ENCODE measurements at regions of chr7 and their contacts with region 1.

Region 1: DNA sequence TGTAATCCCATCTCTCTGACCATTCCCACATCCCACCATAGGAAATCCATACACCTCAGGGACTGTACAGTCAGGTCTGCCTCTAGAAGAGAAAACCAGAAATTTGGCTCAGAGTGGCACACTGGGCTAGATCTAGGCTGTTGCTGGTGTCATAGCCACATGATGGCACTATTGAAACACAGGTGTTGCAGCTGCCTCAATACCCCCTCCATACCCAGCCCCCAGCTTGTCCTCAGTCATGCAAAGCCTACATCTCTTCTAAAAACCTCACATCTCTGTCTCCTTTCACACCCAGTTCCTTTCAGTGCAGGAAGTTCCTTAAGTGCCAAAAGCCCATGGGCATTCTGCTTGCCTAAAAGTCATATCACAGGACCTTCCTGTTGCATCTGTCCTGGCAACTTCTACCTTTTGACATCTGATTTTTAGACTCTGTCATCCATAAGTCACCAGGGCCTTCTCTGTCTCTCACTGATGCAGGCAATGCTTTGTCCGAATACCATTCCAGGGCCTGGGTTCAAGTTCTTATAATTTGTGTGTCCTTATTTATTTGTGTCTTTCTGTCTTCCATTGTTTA is 27.0 kb upstream of the HIBADH start:
- DNase-seq: peak; percentile 78
- H3K4me3 ChIP-seq: no peak overlapping the region
- H3K27ac ChIP-seq: no peak overlapping the region
- H3K4me1 ChIP-seq: peaks cover 11% of the 10 kb centered on the region
- CTCF ChIP-seq: peak; percentile 92

Region 2: DNA sequence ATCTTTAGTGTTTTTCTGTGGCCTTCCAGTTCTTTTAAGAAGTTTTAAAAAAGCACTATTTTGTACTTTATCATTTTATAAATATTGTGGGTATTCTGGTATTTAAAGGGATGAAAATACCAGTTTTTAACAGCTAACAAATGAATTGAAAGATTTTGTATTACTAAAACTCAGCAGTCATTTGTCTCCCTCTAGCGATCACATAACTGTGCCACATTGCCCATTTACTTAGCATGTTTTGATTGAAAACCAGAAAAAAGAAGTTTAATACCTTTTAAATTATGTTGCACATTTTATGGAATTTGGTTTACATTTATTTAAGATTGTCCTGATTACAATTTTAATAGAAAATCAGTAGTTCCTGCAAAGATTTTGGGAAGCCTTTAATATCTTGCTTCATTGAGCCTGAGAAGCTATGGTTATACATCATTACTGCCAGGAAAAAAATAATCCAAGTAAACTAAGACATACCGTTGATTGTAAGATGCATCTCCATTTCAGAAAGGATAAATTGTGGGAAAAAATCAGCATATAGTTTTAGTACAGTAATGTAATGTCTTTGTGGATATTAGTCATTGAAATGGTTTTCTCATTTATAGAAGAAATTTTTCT is 85.1 kb after region 1 on chr7:
- CTCF ChIA-PET with region 1: no interaction called
- POLR2A ChIA-PET with region 1: no interaction called
- intact Hi-C with region 1: loop called (anchors 1 kb)
- DNase-seq: peak; percentile 53
- H3K4me3 ChIP-seq: no peak overlapping the region
- H3K27ac ChIP-seq: no peak overlapping the region
- H3K4me1 ChIP-seq: no peaks in the 10 kb centered on the region
- CTCF ChIP-seq: peak; percentile 99

Region 3: GRCh38 chr7:27793780-27794179 is 104.1 kb after region 1 on chr7:
- CTCF ChIA-PET with region 1: no interaction called
- POLR2A ChIA-PET with region 1: no interaction called
- intact Hi-C with region 1: no loop called
- DNase-seq: no peak
- H3K4me3 ChIP-seq: no peak overlapping the region
- H3K27ac ChIP-seq: no peak overlapping the region
- H3K4me1 ChIP-seq: no peaks in the 10 kb centered on the region
- CTCF ChIP-seq: no peak

Region 4: DNA sequence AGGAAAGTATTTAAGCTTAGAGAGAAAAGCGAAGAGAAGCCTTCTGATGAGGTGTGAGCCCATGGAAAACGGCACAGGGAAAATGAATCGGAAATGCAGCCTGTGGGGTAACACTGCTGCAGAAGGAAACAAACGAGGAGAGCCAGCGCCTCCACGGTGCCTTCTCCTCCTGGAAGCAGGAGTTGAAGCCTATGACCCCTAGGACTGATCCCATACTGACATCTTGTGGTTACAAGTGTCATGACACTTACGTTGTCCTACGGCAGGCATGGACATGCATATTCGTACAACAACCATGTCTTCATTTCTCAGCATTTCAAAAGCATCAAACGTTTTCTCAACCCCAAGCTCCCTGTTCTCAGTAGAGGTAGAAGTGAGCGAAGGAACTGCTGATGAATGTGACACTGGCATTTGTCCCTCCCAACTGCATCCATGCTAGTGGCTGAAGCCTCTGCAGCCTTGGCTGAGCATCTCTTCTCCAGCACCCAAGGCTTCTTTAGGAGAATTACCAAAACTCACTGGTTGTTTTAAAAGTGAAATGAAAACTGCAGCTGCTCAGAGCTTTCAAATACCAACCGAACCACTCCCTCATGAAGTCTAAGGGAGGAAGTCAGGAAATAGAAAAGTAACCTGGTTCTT is 330.7 kb after region 1 on chr7:
- CTCF ChIA-PET with region 1: no interaction called
- POLR2A ChIA-PET with region 1: no interaction called
- intact Hi-C with region 1: loop called (anchors 1 kb)
- DNase-seq: peak; percentile 67
- H3K4me3 ChIP-seq: no peak overlapping the region
- H3K27ac ChIP-seq: no peak overlapping the region
- H3K4me1 ChIP-seq: no peaks in the 10 kb centered on the region
- CTCF ChIP-seq: peak; percentile 88

Region 5: GRCh38 chr7:28096713-28097112 is 407.0 kb after region 1 on chr7:
- CTCF ChIA-PET with region 1: no interaction called
- POLR2A ChIA-PET with region 1: no interaction called
- intact Hi-C with region 1: loop called (anchors 1 kb)
- DNase-seq: peak; percentile 60
- H3K4me3 ChIP-seq: no peak overlapping the region
- H3K27ac ChIP-seq: no peak overlapping the region
- H3K4me1 ChIP-seq: peaks cover 7% of the 10 kb centered on the region
- CTCF ChIP-seq: peak; percentile 97